PC-9 (cell line): ENCODE measurements at regions of chr1 and their contacts with region 1.

Region 1: DNA sequence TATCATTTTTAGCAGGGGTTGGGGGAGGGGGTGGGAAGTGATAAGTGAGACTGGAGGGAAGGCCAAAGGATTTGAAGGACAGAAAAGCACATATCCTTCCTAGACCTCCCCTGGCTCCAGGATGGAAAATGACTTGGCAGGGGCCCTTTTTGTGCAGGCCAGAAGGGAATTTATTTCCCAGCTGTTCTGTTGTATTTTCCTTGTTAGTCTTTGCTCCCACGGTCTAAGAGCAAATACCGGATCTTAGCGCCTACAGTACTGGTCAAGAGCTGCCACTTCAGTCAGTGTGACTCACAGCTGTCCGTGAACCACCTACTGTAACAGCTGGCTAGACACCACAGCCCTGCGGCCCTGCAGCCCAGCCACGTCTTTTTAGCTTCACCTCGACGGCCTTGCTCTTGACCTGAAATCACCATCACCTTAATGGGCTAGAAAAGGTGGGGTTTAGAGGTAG is 51.0 kb upstream of the ERRFI1 start:
- DNase-seq: peak; percentile 67 to 92
- H3K4me3 ChIP-seq: no peak overlapping the region
- H3K27ac ChIP-seq: peak overlapping the region; percentile 98
- H3K4me1 ChIP-seq: peaks cover 69% of the 10 kb centered on the region
- H3K27me3 ChIP-seq: no peaks in the 10 kb centered on the region
- CTCF ChIP-seq: no peak

Region 2: GRCh38 chr1:8026153-8026975 is 50.8 kb before region 1 on chr1 and contains the start of gene ERRFI1:
- CTCF ChIA-PET with region 1: interaction called, 3 read pairs
- POLR2A ChIA-PET with region 1: interaction called, 5 read pairs
- intact Hi-C with region 1: loop called (anchors 5 kb)
- DNase-seq: peak; percentile 74 to 95
- H3K4me3 ChIP-seq: peak within 1 kb of the TSS; percentile 91
- H3K27ac ChIP-seq: peak within 1 kb of the TSS; percentile 98
- H3K4me1 ChIP-seq: peaks cover 26% of the 10 kb centered on the region
- H3K27me3 ChIP-seq: no peaks in the 10 kb centered on the region
- CTCF ChIP-seq: no peak
- total RNA-seq, gene ERRFI1: 44.9 and 47.8 TPM in 2 replicates

Region 3: GRCh38 chr1:8061210-8061609 is 15.9 kb before region 1 on chr1:
- CTCF ChIA-PET with region 1: interaction called, 3 read pairs
- POLR2A ChIA-PET with region 1: interaction called, 10 read pairs
- intact Hi-C with region 1: loop called (anchors 1 kb)
- DNase-seq: peak; percentile 61 to 95
- H3K4me3 ChIP-seq: peak overlapping the region; percentile 47; the same call in 1 of the 2 replicates
- H3K27ac ChIP-seq: peak overlapping the region; percentile 99
- H3K4me1 ChIP-seq: peaks cover 62% of the 10 kb centered on the region
- H3K27me3 ChIP-seq: no peaks in the 10 kb centered on the region
- CTCF ChIP-seq: no peak

Region 4: GRCh38 chr1:8121261-8122170 is 44.4 kb after region 1 on chr1:
- CTCF ChIA-PET with region 1: no interaction called
- POLR2A ChIA-PET with region 1: no interaction called
- intact Hi-C with region 1: loop called (anchors 1 kb)
- DNase-seq: peak; percentile 63 to 96
- H3K4me3 ChIP-seq: peak overlapping the region; percentile 28; the same call in 1 of the 2 replicates
- H3K27ac ChIP-seq: peak overlapping the region; percentile 100
- H3K4me1 ChIP-seq: peaks cover 78% of the 10 kb centered on the region
- H3K27me3 ChIP-seq: no peaks in the 10 kb centered on the region
- CTCF ChIP-seq: no peak

Region 5: DNA sequence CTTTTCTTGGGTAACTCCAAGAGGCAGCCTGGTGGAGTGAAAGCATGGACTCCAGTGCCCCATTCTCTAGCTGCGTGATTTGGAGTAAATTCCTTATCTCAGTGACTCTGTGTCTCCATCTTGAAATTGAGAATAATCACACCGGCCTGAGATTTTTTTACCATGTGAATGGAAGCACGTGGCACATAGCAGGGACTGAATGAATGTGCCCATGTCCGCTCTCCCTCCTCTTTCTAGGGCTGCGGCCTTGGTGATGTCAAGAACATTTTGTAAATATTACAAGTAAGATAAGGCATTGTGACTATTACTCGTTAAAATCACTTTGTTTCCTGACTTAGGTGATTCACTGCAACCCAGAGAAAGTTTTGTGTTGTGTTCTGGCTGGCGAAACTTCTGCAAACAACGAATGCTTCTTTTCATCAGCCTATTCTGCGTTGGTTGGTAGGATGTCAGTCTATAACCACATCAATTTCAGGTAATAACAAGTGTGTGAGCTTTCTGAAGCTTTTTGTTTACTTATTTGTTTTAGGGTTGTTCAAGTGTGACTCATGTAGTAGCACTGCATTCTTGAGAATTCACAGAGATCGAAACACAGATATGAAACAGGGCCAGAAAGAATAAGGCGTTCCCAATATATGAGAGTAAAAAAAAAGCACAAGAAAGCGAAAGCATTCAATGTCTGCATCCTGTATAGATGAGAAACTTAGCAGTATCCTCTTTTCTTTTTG is 105.1 kb after region 1 on chr1:
- CTCF ChIA-PET with region 1: interaction called, 10 read pairs
- POLR2A ChIA-PET with region 1: interaction called, 4 read pairs
- intact Hi-C with region 1: loop called (anchors 5 kb)
- DNase-seq: peak; percentile 64 to 98
- H3K4me3 ChIP-seq: peak overlapping the region; percentile 28; the same call in 1 of the 2 replicates
- H3K27ac ChIP-seq: peak overlapping the region; percentile 100
- H3K4me1 ChIP-seq: peaks cover 40% of the 10 kb centered on the region
- H3K27me3 ChIP-seq: no peaks in the 10 kb centered on the region
- CTCF ChIP-seq: no peak

Region 6: GRCh38 chr1:8232036-8232757 is 155.1 kb after region 1 on chr1:
- CTCF ChIA-PET with region 1: no interaction called
- POLR2A ChIA-PET with region 1: no interaction called
- intact Hi-C with region 1: no loop called
- DNase-seq: no peak
- H3K4me3 ChIP-seq: no peak overlapping the region
- H3K27ac ChIP-seq: no peak overlapping the region
- H3K4me1 ChIP-seq: no peaks in the 10 kb centered on the region
- H3K27me3 ChIP-seq: no peaks in the 10 kb centered on the region
- CTCF ChIP-seq: no peak

Region 7: GRCh38 chr1:8259498-8260290 is 182.5 kb after region 1 on chr1:
- CTCF ChIA-PET with region 1: no interaction called
- POLR2A ChIA-PET with region 1: no interaction called
- intact Hi-C with region 1: loop called (anchors 5 kb)
- DNase-seq: peak; percentile 80 to 82
- H3K4me3 ChIP-seq: peak overlapping the region; percentile 49; the same call in 1 of the 2 replicates
- H3K27ac ChIP-seq: peak overlapping the region; percentile 100
- H3K4me1 ChIP-seq: peaks cover 43% of the 10 kb centered on the region
- H3K27me3 ChIP-seq: no peaks in the 10 kb centered on the region
- CTCF ChIP-seq: no peak